ENCODE measurements at regions of chr3 and their contacts with region 1.

Region 1: DNA sequence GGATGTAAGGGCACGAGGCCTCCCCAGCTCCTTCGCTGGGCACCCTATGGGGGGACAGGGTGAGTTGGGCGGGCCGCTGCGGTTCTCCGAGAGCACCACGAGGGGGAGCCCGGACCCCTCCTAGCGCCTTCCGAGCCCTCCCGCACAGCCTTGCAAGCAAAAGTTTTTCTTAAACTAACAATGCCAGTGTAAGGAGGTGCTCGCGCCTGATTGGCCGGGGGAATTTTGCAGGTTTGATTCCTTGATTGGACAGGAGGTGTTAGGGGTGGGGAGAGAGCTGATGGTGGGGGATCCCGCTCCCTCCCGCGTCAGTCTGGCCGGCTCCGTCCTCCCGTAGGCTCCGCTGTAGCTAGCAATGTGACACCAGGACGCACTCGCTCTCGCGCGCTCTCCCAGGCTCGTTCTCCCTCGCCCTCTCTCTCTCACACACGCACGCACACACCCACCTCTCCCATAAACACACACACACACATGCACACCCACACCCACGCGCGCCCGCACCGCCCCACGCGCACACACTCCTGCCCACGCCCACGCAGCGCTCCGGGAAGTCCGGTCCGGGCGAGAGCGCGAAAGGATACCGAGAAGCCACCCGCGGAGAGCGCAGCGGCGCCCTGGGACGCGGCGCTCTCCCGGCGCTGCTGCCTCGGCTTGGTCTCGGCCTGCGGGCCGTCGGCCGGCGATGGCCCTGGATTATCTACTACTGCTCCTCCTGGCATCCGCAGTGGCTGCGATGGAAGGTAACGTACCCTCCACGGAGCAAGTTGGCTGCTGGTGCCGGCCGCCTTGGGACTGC is at the start of gene EPHB1:
- DNase-seq: peak; percentile 88
- ATAC-seq: peak; percentile 89
- H3K4me3 Mint-ChIP-seq: peak within 1 kb of the TSS; percentile 75
- H3K27ac Mint-ChIP-seq: peak within 1 kb of the TSS; percentile 59
- H3K4me1 Mint-ChIP-seq: peaks cover 7% of the 10 kb centered on the region
- H3K27me3 Mint-ChIP-seq: peaks cover 47% of the 10 kb centered on the region
- total RNA-seq, gene EPHB1: 0.60 to 0.98 TPM

Region 2: DNA sequence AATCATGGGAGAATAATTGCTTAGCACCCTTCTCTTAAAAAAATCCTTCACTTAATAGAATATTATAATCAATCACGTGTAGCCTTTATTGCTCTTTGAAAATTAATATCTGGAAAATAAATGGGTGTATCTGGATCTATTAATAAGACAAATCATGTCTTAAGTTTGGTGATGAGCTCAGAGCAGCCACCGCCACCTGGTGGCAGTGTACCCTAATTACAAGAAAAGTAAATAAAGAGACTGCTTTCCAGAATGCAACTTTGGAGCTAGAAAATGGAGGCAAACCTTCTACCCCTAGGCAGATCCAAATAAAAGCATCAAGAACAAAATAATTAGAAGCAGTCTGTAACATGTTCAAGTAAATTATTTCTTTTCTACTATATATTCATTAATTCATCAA is 43.5 kb after region 1 on chr3:
- CTCF ChIA-PET with region 1: interaction called, 5 read pairs
- POLR2A ChIA-PET with region 1: no interaction called
- intact Hi-C with region 1: loop called in 1 of 2 experiments (anchors 1 kb)
- DNase-seq: peak; percentile 25
- ATAC-seq: no peak
- H3K4me3 Mint-ChIP-seq: no peak overlapping the region
- H3K27ac Mint-ChIP-seq: no peak overlapping the region
- H3K4me1 Mint-ChIP-seq: no peaks in the 10 kb centered on the region
- H3K27me3 Mint-ChIP-seq: peaks cover 4% of the 10 kb centered on the region

Region 3: GRCh38 chr3:134874737-134875413 is 79.7 kb after region 1 on chr3:
- CTCF ChIA-PET with region 1: no interaction called
- POLR2A ChIA-PET with region 1: no interaction called
- intact Hi-C with region 1: no loop called
- DNase-seq: no peak
- ATAC-seq: no peak
- H3K4me3 Mint-ChIP-seq: no peak overlapping the region
- H3K27ac Mint-ChIP-seq: no peak overlapping the region
- H3K4me1 Mint-ChIP-seq: no peaks in the 10 kb centered on the region
- H3K27me3 Mint-ChIP-seq: peaks cover 3% of the 10 kb centered on the region

Region 4: DNA sequence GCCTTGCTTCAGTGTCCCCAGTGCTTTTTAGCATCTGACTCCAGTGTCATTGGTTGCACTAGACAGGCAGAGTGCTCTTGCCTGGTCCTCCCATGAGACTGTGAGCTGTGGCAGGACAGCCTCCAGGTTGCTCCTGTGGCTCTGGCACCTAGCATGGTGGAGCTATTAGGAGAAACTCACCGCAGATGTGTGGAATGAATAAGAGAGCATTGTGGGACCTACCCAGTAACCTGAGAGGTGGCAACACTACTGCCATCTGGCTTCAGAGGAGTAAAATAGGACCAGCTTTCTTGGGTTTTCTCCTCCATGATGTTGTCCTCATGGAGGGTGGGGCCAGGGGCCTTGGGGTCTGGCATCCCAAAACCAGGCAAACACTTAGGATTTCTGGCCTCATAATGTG is 183.5 kb after region 1 on chr3:
- CTCF ChIA-PET with region 1: no interaction called
- POLR2A ChIA-PET with region 1: no interaction called
- intact Hi-C with region 1: loop called in 1 of 2 experiments (anchors 2 kb)
- DNase-seq: no peak
- ATAC-seq: no peak
- H3K4me3 Mint-ChIP-seq: no peak overlapping the region
- H3K27ac Mint-ChIP-seq: no peak overlapping the region
- H3K4me1 Mint-ChIP-seq: no peaks in the 10 kb centered on the region
- H3K27me3 Mint-ChIP-seq: no peaks in the 10 kb centered on the region

Region 5: DNA sequence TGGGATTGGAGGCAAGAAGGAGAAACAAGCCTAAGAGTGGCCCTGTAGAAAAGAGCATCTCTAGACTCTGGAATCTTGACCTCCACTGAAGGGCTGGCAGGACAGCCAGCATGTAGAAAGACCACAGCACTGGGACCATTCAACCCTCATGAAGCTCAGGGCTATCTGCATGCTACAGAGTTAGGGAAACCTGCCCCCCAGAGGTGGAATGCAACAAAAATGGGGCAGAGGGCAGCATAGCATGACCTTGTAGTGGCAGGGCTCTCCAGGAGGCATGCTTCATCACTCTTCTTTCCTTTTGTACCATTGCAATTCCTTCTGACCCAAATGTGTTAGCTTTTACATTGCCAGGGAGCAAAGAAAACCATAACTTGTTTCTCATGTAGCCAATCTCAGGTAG is 445.3 kb after region 1 on chr3:
- CTCF ChIA-PET with region 1: no interaction called
- POLR2A ChIA-PET with region 1: no interaction called
- intact Hi-C with region 1: loop called in 1 of 2 experiments (anchors 1 kb)
- DNase-seq: peak; percentile 11
- ATAC-seq: no peak
- H3K4me3 Mint-ChIP-seq: no peak overlapping the region
- H3K27ac Mint-ChIP-seq: no peak overlapping the region
- H3K4me1 Mint-ChIP-seq: no peaks in the 10 kb centered on the region
- H3K27me3 Mint-ChIP-seq: no peaks in the 10 kb centered on the region

Region 6: GRCh38 chr3:135503760-135504686 is 708.9 kb after region 1 on chr3:
- CTCF ChIA-PET with region 1: interaction called, 3 read pairs
- POLR2A ChIA-PET with region 1: no interaction called
- intact Hi-C with region 1: loop called (anchors 1 to 5 kb)
- DNase-seq: peak; percentile 66
- ATAC-seq: no peak
- H3K4me3 Mint-ChIP-seq: no peak overlapping the region
- H3K27ac Mint-ChIP-seq: no peak overlapping the region
- H3K4me1 Mint-ChIP-seq: no peaks in the 10 kb centered on the region
- H3K27me3 Mint-ChIP-seq: peaks cover 12% of the 10 kb centered on the region

Region 7: DNA sequence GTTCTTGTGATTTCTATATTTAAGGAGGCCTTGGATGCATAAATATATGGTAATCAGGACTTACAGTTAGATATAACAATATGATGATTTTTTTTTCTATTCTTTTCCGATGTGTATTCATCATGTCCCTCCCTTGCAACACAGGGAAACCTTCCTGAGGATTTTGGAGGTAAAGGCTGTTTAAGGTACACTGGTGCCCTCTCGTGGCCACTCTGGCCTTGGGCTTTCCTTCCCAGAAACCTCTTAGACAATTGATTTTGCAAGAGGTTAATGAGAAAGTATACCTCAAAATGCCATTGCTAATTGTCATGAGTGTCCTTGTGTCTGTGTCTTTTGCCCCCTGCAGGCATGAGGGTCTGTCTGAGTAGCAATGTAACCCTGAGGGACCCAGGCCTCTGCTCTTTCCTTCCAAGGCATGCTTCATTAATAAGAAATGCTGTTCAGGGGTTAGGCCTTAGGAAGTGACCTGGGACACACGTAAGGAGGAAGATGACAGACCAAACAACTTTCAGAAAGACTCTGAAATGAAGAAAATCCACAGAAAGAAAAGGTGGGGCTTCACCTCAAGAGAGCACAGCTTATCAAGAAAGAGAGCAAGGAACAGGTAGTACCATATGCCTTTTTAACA is 1100.1 kb after region 1 on chr3:
- CTCF ChIA-PET with region 1: interaction called, 3 read pairs
- POLR2A ChIA-PET with region 1: no interaction called
- intact Hi-C with region 1: loop called in 1 of 2 experiments (anchors 2 kb)
- DNase-seq: peak; percentile 73
- ATAC-seq: no peak
- H3K4me3 Mint-ChIP-seq: no peak overlapping the region
- H3K27ac Mint-ChIP-seq: no peak overlapping the region
- H3K4me1 Mint-ChIP-seq: no peaks in the 10 kb centered on the region
- H3K27me3 Mint-ChIP-seq: peaks cover 6% of the 10 kb centered on the region

Region 8: GRCh38 chr3:136042608-136043221 is 1247.6 kb after region 1 on chr3:
- CTCF ChIA-PET with region 1: interaction called, 4 read pairs
- POLR2A ChIA-PET with region 1: no interaction called
- intact Hi-C with region 1: loop called in 1 of 2 experiments (anchors 5 kb)
- DNase-seq: no peak
- ATAC-seq: peak; percentile 19
- H3K4me3 Mint-ChIP-seq: no peak overlapping the region
- H3K27ac Mint-ChIP-seq: no peak overlapping the region
- H3K4me1 Mint-ChIP-seq: no peaks in the 10 kb centered on the region
- H3K27me3 Mint-ChIP-seq: peaks cover 13% of the 10 kb centered on the region

Measured in activated CD4-positive, alpha-beta T cell treated with anti-CD3 and anti-CD28 coated beads for 36 hours (primary cell).